ENCODE measurements at regions of chr14 and their contacts with region 1.

Region 1: GRCh38 chr14:66507722-66508546 is at the start of gene GPHN:
- DNase-seq: peak; percentile 97
- H3K4me3 Mint-ChIP-seq: peak within 1 kb of the TSS; percentile 89
- H3K27ac Mint-ChIP-seq: peak within 1 kb of the TSS; percentile 96
- H3K4me1 Mint-ChIP-seq: peaks cover 24% of the 10 kb centered on the region
- H3K27me3 Mint-ChIP-seq: peaks cover 20% of the 10 kb centered on the region
- total RNA-seq, gene GPHN: 44.4 and 46.8 TPM in 2 replicates

Region 2: GRCh38 chr14:66487164-66487563 is 20.8 kb before region 1 on chr14:
- intact Hi-C with region 1: no loop called
- DNase-seq: no peak
- H3K4me3 Mint-ChIP-seq: no peak overlapping the region
- H3K27ac Mint-ChIP-seq: no peak overlapping the region
- H3K4me1 Mint-ChIP-seq: no peaks in the 10 kb centered on the region
- H3K27me3 Mint-ChIP-seq: peaks cover 4% of the 10 kb centered on the region

Region 3: DNA sequence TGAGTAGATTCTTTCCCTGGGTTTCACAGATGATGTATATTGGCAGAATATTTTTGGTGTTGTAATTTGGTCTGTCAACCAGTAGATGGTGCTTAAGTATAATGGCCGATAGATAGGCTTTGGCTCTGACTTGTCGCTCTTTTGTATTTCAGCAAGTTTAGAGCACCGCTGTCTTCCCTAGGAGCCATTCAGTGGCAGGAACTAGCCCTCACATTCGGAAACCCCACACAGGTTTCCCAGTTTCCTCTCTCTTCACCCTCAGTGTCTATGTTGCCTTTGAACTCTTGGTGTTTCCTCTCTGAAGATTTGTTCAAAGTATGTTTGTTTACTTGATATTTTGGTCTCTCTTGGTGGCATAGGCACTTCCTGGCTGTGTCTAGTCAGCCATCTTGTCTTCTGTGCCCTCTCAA is 102.2 kb after region 1 on chr14:
- intact Hi-C with region 1: loop called (anchors 5 kb)
- DNase-seq: peak; percentile 71
- H3K4me3 Mint-ChIP-seq: peak overlapping the region; percentile 27
- H3K27ac Mint-ChIP-seq: peak overlapping the region; percentile 43
- H3K4me1 Mint-ChIP-seq: peaks cover 18% of the 10 kb centered on the region
- H3K27me3 Mint-ChIP-seq: no peaks in the 10 kb centered on the region

Region 4: DNA sequence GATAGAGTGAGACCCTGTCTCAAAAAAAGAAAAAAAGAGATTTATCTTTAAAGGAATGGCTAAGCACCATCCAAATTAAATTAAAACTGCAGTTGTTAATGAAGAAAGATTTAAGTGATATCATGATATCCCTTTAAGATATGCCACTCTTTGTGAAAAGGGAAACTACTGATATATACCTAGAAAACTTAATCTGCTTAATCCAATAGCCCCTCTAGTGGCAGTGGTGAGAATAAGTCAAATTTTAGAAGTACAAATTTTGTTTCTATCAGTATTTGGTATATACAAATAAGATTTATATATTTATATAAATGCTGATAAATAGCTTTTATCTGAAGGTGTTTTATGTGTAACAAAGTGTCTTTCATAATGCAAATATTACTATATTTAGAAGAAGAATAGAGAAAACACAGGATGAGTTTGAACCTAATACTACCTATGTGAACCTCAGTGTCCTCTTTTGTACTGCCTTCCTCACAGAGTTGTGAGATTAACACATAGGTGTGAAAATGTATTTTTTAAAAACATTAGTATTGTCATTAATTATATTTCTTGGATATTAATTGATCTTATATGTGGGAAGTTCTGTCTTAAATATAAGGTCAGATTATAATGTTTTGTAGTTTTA is 629.9 kb after region 1 on chr14:
- intact Hi-C with region 1: loop called (anchors 1 kb)
- DNase-seq: no peak
- H3K4me3 Mint-ChIP-seq: no peak overlapping the region
- H3K27ac Mint-ChIP-seq: no peak overlapping the region
- H3K4me1 Mint-ChIP-seq: peaks cover 8% of the 10 kb centered on the region
- H3K27me3 Mint-ChIP-seq: no peaks in the 10 kb centered on the region

Region 5: GRCh38 chr14:67240978-67241414 is 733.1 kb after region 1 on chr14:
- intact Hi-C with region 1: loop called (anchors 1 kb)
- DNase-seq: peak; percentile 98
- H3K4me3 Mint-ChIP-seq: peak overlapping the region; percentile 88
- H3K27ac Mint-ChIP-seq: peak overlapping the region; percentile 84
- H3K4me1 Mint-ChIP-seq: peaks cover 11% of the 10 kb centered on the region
- H3K27me3 Mint-ChIP-seq: peaks cover 24% of the 10 kb centered on the region

Region 6: GRCh38 chr14:67359775-67360648 is 852.1 kb after region 1 on chr14 and contains the starts of genes ATP6V1D and EIF2S1:
- intact Hi-C with region 1: loop called (anchors 1 kb)
- DNase-seq: peak; percentile 100
- H3K4me3 Mint-ChIP-seq: peak within 1 kb of the TSS; percentile 94
- H3K27ac Mint-ChIP-seq: peak within 1 kb of the TSS; percentile 99
- H3K4me1 Mint-ChIP-seq: peaks cover 44% of the 10 kb centered on the region
- H3K27me3 Mint-ChIP-seq: peaks cover 4% of the 10 kb centered on the region
- total RNA-seq, gene ATP6V1D: 29.7 and 30.1 TPM in 2 replicates
- total RNA-seq, gene EIF2S1: 255 and 268 TPM in 2 replicates

Region 7: GRCh38 chr14:67816326-67817002 is 1308.5 kb after region 1 on chr14 and contains the start of gene ZFYVE26:
- intact Hi-C with region 1: loop called (anchors 5 kb)
- DNase-seq: peak; percentile 97
- H3K4me3 Mint-ChIP-seq: peak within 1 kb of the TSS; percentile 89
- H3K27ac Mint-ChIP-seq: peak within 1 kb of the TSS; percentile 93
- H3K4me1 Mint-ChIP-seq: peaks cover 36% of the 10 kb centered on the region
- H3K27me3 Mint-ChIP-seq: no peaks in the 10 kb centered on the region
- total RNA-seq, gene ZFYVE26: 13.5 and 15.8 TPM in 2 replicates

Measured in activated CD4-positive, alpha-beta T cell treated with anti-CD3 and anti-CD28 coated beads, Interleukin-2, amount 10 ng/mL, durations not matched to agents 24 days and 14 days (primary cell).